ENCODE measurements at regions of chr12 and their contacts with region 1.

Region 1: DNA sequence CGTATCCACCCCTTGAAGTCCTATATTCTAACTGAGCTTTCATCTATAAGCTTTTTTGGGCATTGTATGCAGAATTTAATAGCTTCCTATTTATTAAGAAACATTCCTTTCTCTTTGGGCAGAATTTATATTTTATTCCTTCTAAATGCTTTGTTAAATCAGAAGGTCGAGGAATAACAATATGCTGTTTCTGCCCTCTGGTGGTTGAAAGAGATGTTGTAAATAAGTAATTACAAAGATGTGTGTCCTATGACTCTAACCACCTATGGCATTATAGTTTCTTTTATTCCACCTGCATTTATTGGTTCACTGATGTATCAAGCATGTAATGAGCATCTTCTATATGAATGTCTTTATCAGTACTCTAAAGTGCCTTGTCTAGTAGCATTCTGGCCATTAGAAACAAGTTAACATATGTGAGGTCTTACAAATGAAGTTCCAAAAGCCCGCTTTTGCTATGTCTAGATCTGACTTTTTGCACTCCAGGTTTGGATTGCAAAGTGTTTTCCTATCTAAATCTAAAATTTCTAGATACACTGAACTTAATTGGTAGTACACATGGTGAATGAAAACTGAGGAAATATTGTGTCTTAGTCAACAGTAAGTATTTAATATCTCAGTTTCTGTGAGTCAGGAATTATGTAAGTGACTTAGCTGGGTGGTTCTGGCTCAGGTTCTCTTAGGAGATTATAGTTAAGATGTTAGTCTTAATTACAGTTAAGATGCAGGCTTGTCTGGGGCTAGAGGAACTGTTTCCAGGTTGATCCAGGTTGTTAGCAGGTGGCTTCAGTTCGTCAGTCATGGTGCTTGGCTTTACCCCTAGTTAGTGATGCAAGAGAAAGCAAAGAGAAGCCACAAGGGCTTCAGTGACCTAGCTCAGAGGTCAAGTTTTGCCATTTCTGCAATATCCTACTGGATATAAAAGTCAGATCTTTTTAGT is 57.5 kb downstream of the PLEKHA5 start:
- ATAC-seq: peak in 4 of 8 experiments; percentile 28 to 66 (median 54)
- H3K4me3 ChIP-seq: no peak overlapping the region
- H3K27ac ChIP-seq: no peak overlapping the region
- H3K4me1 ChIP-seq: peaks cover 0 to 3% of the 10 kb centered on the region in 2 donors

Region 2: GRCh38 chr12:18224745-18225144 is 962.2 kb before region 1 on chr12:
- in situ Hi-C with region 1: loop called in 1 of 9 experiments (anchors 25 kb)
- ATAC-seq: peak in 4 of 8 experiments; percentile 58 to 89 (median 84)
- H3K4me3 ChIP-seq: no peak overlapping the region
- H3K27ac ChIP-seq: no peak overlapping the region
- H3K4me1 ChIP-seq: peaks cover 0 to 13% of the 10 kb centered on the region in 2 donors

Region 3: GRCh38 chr12:18250313-18250916 is 936.6 kb before region 1 on chr12:
- in situ Hi-C with region 1: loop called in 3 of 9 experiments (anchors 25 kb)
- ATAC-seq: peak in 7 of 8 experiments; percentile 35 to 79 (median 57)
- H3K4me3 ChIP-seq: no peak overlapping the region
- H3K27ac ChIP-seq: no peak overlapping the region
- H3K4me1 ChIP-seq: peaks cover 0 to 6% of the 10 kb centered on the region in 2 donors

Region 4: DNA sequence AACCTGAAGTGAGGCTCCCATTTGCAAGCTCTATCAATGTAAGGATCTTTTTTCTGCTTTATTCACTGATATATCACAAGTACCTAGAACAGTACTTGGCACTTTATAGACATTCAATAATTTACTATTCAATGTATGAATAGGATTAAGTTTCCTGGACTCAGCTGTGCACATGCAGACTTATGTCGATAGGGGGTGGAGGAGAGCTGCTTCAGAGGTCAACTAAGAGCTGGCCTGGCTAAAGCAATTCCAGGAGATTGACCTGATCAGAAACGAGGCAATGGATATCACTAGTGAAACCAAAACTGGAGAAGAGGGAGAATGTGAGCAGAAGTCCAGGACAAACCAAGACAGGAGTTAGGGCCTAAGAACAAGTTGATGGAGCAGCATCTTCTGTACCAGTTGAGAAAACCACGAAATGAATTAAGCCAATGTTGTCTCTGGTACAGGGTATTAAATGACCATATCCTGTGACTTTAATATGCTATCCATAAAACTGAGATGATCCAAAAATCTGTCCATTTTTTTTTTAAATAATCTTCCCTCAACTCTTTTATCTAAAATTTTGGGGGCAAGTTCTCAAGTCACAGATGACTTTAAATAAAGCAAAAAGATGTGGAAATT is 756.5 kb before region 1 on chr12:
- in situ Hi-C with region 1: loop called in 1 of 9 experiments (anchors 25 kb)
- ATAC-seq: peak in 5 of 8 experiments; percentile 35 to 91 (median 85)
- H3K4me3 ChIP-seq: no peak overlapping the region
- H3K27ac ChIP-seq: no peak overlapping the region
- H3K4me1 ChIP-seq: peaks cover 3 to 4% of the 10 kb centered on the region in 2 donors

Region 5: GRCh38 chr12:18849080-18849479 is 337.9 kb before region 1 on chr12:
- in situ Hi-C with region 1: no loop called
- ATAC-seq: no peak
- H3K4me3 ChIP-seq: no peak overlapping the region
- H3K27ac ChIP-seq: no peak overlapping the region
- H3K4me1 ChIP-seq: no peaks in the 10 kb centered on the region

Region 6: DNA sequence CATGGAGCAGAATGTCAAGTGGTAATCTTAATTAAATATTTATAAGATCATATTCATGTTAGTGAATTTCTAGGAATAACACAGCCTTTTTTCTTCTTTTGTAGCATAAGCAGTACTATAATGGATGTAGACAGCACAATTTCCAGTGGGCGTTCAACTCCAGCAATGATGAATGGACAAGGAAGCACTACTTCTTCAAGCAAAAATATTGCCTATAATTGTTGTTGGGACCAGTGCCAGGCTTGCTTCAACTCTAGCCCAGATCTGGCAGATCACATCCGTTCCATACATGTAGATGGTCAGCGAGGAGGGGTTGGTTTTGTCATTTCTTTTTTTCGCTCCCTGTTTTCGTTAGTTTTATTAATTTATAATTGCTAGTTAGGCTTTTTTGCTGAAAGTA is 275.4 kb after region 1 on chr12:
- in situ Hi-C with region 1: no loop called
- ATAC-seq: peak in 1 of 8 experiments; percentile 31
- H3K4me3 ChIP-seq: no peak overlapping the region
- H3K27ac ChIP-seq: no peak overlapping the region
- H3K4me1 ChIP-seq: no peaks in the 10 kb centered on the region

Region 7: DNA sequence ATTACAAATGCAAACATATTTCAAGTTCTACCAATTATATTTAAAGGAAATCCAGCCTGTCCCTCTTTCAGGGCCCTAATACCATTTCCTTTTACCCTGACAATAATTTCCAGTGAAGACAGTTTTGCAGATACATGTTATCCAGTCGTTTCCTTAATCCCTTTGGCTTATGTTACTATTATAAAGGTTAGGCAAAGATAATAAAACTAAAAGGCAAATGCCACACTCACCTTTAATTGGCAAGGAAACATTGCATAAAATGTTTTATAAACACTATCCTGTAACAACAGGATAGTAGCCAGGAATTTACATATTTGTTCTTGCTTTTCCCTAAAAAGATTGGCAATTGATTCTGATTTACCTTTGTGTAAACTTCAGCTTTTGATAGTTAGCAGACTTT is 421.0 kb after region 1 on chr12:
- in situ Hi-C with region 1: no loop called
- ATAC-seq: no peak
- H3K4me3 ChIP-seq: no peak overlapping the region
- H3K27ac ChIP-seq: no peak overlapping the region
- H3K4me1 ChIP-seq: no peaks in the 10 kb centered on the region

Measured in motor neuron (in vitro differentiated cells).